ENCODE measurements at regions of chr14 and their contacts with region 1.

Region 1: GRCh38 chr14:24442273-24443052 is at the start of gene SDR39U1:
- DNase-seq: peak; percentile 99
- H3K4me3 Mint-ChIP-seq: peak within 1 kb of the TSS; percentile 98
- H3K27ac Mint-ChIP-seq: peak within 1 kb of the TSS; percentile 99
- H3K4me1 Mint-ChIP-seq: peaks cover 49% of the 10 kb centered on the region
- H3K27me3 Mint-ChIP-seq: peaks cover 4% of the 10 kb centered on the region
- total RNA-seq, gene SDR39U1: 40.8 and 49.7 TPM in 2 replicates

Region 2: DNA sequence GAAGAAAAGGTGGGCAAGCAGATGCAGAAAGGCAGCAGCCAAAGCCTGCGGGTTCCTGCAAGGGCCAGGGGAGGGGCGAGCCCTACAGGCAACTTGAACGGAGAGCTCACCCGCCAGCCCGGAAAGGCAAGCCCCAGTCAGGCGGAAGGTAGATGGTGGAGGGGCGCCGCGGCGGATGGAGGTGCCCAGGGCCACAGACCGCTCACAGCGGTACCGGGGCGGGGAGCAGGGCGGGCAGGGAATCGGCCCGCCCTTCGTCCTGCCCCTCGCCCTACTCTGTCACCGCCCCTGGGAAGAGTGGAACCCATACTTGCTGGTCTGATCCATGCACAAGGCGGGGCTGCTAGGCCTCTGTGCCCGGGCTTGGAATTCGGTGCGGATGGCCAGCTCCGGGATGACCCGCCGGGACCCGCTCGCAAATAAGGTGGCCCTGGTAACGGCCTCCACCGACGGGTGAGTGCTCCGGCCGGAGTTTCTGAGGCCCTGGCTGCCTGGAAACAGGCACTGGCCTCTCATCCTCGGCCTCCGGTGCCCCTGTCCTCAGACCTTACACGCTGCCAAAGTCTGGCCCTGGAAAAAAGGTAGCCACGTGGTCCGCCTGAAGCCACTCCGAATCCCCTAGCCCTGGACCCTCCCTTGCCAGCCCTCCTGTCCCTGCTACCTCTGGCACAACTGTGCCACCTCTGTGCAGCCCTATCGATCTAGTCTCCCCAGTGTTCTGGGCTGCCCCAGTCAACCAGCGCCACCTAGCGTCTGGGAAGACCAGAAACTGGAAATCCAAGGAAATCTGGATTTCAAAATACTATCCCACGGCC is 488.8 kb before region 1 on chr14 and contains the start of gene DHRS4:
- intact Hi-C with region 1: loop called (anchors 2 kb)
- DNase-seq: peak; percentile 93
- H3K4me3 Mint-ChIP-seq: peak within 1 kb of the TSS; percentile 99
- H3K27ac Mint-ChIP-seq: peak within 1 kb of the TSS; percentile 90
- H3K4me1 Mint-ChIP-seq: peaks cover 15% of the 10 kb centered on the region
- H3K27me3 Mint-ChIP-seq: no peaks in the 10 kb centered on the region
- total RNA-seq, gene DHRS4: 17.6 and 18.2 TPM in 2 replicates

Region 3: DNA sequence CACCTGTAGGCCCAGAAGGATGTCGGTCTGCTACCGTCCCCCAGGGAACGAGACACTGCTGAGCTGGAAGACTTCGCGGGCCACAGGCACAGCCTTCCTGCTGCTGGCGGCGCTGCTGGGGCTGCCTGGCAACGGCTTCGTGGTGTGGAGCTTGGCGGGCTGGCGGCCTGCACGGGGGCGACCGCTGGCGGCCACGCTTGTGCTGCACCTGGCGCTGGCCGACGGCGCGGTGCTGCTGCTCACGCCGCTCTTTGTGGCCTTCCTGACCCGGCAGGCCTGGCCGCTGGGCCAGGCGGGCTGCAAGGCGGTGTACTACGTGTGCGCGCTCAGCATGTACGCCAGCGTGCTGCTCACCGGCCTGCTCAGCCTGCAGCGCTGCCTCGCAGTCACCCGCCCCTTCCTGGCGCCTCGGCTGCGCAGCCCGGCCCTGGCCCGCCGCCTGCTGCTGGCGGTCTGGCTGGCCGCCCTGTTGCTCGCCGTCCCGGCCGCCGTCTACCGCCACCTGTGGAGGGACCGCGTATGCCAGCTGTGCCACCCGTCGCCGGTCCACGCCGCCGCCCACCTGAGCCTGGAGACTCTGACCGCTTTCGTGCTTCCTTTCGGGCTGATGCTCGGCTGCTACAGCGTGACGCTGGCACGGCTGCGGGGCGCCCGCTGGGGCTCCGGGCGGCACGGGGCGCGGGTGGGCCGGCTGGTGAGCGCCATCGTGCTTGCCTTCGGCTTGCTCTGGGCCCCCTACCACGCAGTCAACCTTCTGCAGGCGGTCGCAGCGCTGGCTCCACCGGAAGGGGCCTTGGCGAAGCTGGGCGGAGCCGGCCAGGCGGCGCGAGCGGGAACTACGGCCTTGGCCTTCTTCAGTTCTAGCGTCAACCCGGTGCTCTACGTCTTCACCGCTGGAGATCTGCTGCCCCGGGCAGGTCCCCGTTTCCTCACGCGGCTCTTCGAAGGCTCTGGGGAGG is 131.5 kb before region 1 on chr14 and contains the start of gene LTB4R:
- intact Hi-C with region 1: loop called (anchors 2 kb)
- DNase-seq: peak; percentile 89
- H3K4me3 Mint-ChIP-seq: peak within 1 kb of the TSS; percentile 86
- H3K27ac Mint-ChIP-seq: peak within 1 kb of the TSS; percentile 91
- H3K4me1 Mint-ChIP-seq: peaks cover 68% of the 10 kb centered on the region
- H3K27me3 Mint-ChIP-seq: no peaks in the 10 kb centered on the region
- total RNA-seq, gene LTB4R: 12.2 and 14.2 TPM in 2 replicates

Region 4: GRCh38 chr14:24630872-24631477 is 188.5 kb after region 1 on chr14:
- intact Hi-C with region 1: loop called (anchors 5 kb)
- DNase-seq: peak; percentile 54
- H3K4me3 Mint-ChIP-seq: peak overlapping the region; percentile 96
- H3K27ac Mint-ChIP-seq: peak overlapping the region; percentile 95
- H3K4me1 Mint-ChIP-seq: peaks cover 65% of the 10 kb centered on the region
- H3K27me3 Mint-ChIP-seq: no peaks in the 10 kb centered on the region